ENCODE measurements at regions of chr13 and their contacts with region 1.

Region 1: GRCh38 chr13:23510979-23511735 is 59.1 kb upstream of the TNFRSF19 start:
- DNase-seq: no peak
- ATAC-seq: peak; percentile 11 to 36

Region 2: GRCh38 chr13:22648320-22648801 is 862.8 kb before region 1 on chr13:
- intact Hi-C with region 1: no loop called
- DNase-seq: no peak
- ATAC-seq: no peak

Region 3: DNA sequence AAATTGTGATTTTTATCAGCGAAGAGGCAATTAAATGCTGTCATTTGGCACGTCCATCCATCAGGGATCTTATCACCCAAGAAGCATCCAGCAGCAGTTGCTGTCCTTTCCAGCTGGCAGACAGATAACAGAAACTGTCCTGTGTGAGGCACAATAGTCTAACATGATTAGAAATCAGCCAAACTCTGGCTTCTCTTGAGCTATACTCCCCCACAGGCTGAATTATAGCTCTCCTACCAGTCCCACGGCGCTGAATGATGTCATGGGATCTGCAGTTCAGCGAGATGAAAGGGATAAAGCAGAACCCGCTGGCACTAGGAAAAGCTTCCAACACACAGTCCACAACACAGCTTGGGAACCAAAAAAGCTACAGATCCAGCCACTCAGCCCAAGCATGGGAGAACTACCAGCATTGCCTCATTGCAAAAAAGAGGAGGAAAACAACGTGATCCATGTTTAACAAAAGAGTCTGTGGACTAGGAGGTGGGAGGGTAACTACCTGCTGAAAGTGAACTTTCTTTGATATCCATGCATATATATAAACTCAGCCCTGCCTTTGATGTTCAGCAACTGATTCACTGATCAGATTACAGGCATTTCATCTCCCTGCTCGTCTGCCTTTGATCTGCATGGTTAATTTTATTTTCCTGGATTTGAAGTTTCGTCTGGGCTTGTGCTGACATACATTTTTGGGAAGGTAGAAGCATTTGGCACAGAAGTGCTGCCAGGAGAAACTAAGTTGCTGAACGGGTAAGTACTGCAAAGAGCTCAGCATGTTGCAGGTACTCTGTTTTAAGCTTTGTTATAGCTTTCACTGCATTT is 59.2 kb after region 1 on chr13 and contains the start of gene TNFRSF19:
- intact Hi-C with region 1: loop called (anchors 2 to 10 kb)
- DNase-seq: peak; percentile 71
- ATAC-seq: peak; percentile 83 to 95
- total RNA-seq, gene TNFRSF19: 35.6 to 45.7 TPM

Region 4: DNA sequence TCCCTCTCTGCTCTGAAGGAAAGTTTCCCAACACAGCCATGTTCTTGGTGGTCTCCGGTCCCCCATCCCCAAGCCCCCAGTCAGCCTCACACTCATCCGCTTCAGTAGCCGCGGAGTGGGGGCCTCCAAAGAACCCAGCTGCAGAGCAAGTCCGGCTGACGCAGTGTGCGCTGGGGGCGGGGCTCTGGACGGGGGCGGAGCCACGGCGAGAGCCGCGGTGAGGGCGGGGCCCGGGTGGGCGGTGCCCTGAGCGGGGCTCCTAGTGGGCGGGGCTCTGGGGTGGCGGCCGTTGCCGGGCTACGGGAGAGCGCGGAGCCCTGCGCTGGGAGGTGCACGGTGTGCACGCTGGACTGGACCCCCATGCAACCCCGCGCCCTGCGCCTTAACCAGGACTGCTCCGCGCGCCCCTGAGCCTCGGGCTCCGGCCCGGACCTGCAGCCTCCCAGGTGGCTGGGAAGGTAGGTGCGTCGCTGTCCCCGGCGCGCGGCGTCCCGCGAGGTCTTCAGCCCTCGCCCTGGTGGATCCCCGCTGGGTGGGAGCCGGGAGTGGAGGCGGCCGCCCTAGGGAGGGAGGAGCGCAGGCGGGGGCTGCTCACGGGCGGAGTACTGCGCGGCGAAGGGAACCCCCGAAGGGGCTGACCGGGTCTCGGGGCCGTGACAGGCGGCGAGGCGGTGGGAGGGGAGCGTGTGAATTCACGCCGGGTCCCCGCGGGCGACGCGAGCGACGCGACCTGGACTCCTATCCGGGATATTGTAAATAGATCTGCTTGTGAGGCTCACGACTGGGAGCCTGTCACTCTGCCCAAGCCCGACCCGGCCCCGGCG is 68.1 kb after region 1 on chr13:
- intact Hi-C with region 1: loop called in 1 of 2 experiments (anchors 10 kb)
- DNase-seq: peak; percentile 93
- ATAC-seq: peak; percentile 99